ENCODE measurements at regions of chr18 and their contacts with region 1.

Region 1: GRCh38 chr18:51197661-51198424 is at the start of gene MEX3C:
- DNase-seq: peak; percentile 99
- ATAC-seq: peak; percentile 88
- H3K4me3 ChIP-seq: peak within 1 kb of the TSS; percentile 98
- H3K27ac ChIP-seq: peak within 1 kb of the TSS; percentile 90
- H3K4me1 ChIP-seq: peaks cover 2% of the 10 kb centered on the region; the same call in 1 of the 2 replicates
- H3K27me3 ChIP-seq: no peaks in the 10 kb centered on the region
- CTCF ChIP-seq: 0 out of 2 replicates have a peak, but pooled peaks have one; percentile 10
- POLR2A ChIP-seq: no peak
- RAD21 ChIP-seq: no peak
- total RNA-seq, gene MEX3C: 42.8 and 50.9 TPM in 2 replicates

Region 2: DNA sequence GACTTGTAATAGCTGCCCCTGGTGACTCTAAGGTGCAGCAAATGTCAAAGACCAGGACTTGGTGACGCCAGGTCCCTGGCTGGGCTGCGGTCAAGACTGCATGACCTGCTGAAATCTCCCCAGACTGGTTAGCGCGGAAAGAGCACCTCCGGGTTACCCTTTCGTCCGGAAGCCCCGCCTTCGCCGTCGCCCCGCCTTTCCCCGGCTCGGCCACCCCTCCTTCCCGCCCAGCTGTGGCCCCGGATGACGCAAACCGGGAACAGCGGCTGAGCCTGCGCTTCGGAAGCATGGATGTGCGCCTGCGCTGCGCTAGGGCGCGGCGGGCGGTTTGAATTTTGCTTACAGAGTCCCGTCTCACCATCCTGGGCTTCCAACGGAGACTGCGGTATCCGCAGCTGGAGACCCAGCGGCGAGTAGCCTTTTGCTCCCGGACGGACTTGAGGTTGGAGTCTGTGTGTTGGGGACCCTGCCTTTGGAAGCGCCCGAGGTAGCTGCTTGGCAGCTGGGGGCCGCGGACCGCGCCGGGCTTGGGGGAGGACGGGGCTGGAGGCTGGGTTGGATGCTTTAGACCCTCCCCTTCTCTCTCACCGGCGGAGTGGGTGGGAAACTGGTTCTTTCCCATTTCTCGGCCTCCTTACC is 823.0 kb before region 1 on chr18 and contains the start of gene SKA1:
- CTCF ChIA-PET with region 1: no interaction called
- POLR2A ChIA-PET with region 1: no interaction called
- dilution Hi-C with region 1: no loop called
- in situ Hi-C with region 1: no loop called
- intact Hi-C with region 1: no loop called
- DNase-seq: peak; percentile 89
- ATAC-seq: peak; percentile 100
- H3K4me3 ChIP-seq: peak within 1 kb of the TSS; percentile 80
- H3K27ac ChIP-seq: peak within 1 kb of the TSS; percentile 48
- H3K4me1 ChIP-seq: no peaks in the 10 kb centered on the region
- H3K27me3 ChIP-seq: no peaks in the 10 kb centered on the region
- CTCF ChIP-seq: no peak
- POLR2A ChIP-seq: no peak; the same call in 1 of the 2 replicates
- RAD21 ChIP-seq: no peak
- total RNA-seq, gene SKA1: 5.9 and 13.9 TPM in 2 replicates

Region 3: DNA sequence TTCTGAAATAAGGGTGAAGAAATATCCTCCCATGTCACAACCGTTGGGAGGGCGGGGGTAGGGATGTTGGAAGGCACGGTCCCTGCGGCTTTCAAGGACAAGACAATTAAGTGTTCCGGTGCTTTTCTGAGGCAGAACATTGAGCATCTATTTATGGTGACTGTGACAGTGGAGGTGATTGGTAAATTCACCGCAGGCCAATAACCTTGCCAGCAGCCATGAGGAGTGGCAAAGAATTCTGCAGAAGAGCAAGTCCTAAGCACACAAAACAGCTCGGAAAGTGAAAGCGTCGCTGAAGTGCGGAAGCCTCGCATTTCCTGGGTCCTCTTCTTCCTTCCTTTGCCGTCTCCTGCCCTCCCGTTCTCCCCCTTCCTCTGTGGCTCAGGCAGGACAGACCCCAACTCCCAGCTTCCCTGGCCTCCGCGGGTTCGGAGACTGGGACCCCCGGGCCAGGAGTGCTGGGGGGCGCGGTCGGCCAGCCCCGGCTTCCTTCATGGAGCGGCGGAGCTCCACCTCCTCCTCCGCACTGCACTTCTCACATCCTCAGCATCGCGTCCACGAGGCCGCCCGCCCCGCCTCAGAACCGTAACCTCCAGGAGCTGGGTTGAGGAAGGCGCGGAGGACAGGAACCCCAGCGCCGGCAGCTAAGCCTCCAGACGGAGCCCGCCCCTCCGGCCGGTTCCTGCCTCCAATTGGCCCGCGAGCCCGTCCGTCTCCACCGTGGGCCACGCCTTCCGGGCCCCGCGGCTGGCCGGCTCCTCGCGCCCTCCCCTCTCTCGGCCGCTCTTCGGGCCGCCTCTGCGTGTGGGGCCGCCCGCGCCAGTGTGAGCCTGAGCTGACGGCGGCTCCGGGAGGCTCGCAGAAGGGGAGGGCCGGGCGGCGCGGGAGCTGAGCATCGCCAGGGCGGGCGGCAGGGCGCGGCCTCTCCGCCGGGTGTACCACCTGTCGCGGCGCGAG is 319.2 kb before region 1 on chr18 and contains the start of gene ME2:
- CTCF ChIA-PET with region 1: no interaction called
- POLR2A ChIA-PET with region 1: no interaction called
- dilution Hi-C with region 1: no loop called
- in situ Hi-C with region 1: no loop called
- intact Hi-C with region 1: loop called (anchors 1 kb)
- DNase-seq: peak; percentile 86
- ATAC-seq: peak; percentile 97
- H3K4me3 ChIP-seq: peak within 1 kb of the TSS; percentile 86
- H3K27ac ChIP-seq: peak within 1 kb of the TSS; percentile 86
- H3K4me1 ChIP-seq: no peaks in the 10 kb centered on the region
- H3K27me3 ChIP-seq: no peaks in the 10 kb centered on the region
- CTCF ChIP-seq: no peak
- POLR2A ChIP-seq: peak; percentile 75
- RAD21 ChIP-seq: no peak
- total RNA-seq, gene ME2: 32.6 and 50.0 TPM in 2 replicates

Region 4: DNA sequence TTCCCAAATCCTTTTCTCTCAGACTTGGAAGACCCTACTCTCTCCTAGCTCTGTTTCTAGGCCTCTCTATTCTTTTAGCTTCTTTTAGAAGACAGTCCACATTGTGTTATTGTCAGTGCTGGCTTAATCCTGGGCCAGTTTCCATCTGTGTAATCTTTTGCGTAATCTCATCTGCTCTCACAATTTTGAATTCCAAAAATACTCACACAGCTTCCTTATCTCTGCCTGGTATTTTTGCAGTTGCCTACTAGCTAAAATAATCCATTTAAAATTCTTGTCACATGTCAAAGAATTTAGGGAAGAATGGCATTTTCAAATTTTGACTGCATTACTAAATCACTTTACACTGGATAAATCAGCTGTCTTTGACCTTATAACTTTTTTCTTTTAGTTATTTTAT is 200.3 kb after region 1 on chr18:
- CTCF ChIA-PET with region 1: no interaction called
- POLR2A ChIA-PET with region 1: no interaction called
- dilution Hi-C with region 1: no loop called
- in situ Hi-C with region 1: no loop called
- intact Hi-C with region 1: no loop called
- DNase-seq: no peak
- ATAC-seq: no peak
- H3K4me3 ChIP-seq: no peak overlapping the region
- H3K27ac ChIP-seq: no peak overlapping the region
- H3K4me1 ChIP-seq: no peaks in the 10 kb centered on the region
- H3K27me3 ChIP-seq: no peaks in the 10 kb centered on the region
- CTCF ChIP-seq: no peak
- POLR2A ChIP-seq: no peak
- RAD21 ChIP-seq: no peak